CD8-positive, alpha-beta T cell (primary cell): ENCODE measurements at regions of chr3 and their contacts with region 1.

Region 1: DNA sequence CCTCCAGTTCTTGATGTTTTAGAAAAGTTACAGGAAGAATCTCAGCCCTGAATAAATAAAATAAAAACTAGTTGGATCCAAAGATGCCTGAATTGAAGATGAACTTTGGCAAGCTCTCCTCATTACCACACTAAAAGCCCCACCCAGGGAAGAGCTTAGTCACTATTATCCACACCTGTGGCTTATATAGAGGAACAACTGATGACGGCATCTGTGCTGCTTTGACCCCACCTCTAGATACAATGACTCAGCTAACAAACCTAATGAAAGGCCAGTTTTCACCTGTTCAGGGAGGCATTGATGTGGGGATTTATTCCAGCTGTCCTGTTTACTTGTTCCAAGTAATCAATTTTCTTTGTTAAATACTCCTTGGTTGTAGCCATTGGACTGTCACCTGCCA is 604.7 kb upstream of the EPHA6 start:
- DNase-seq: no peak
- ATAC-seq: no peak
- H3K4me3 ChIP-seq: no peak overlapping the region
- H3K4me3 Mint-ChIP-seq: no peak overlapping the region
- H3K27ac ChIP-seq: no peak overlapping the region
- H3K27ac Mint-ChIP-seq: no peak overlapping the region
- H3K4me1 ChIP-seq: no peaks in the 10 kb centered on the region
- H3K4me1 Mint-ChIP-seq: no peaks in the 10 kb centered on the region
- H3K27me3 ChIP-seq: no peaks in the 10 kb centered on the region
- H3K27me3 Mint-ChIP-seq: no peaks in the 10 kb centered on the region
- CTCF ChIP-seq: no peak

Region 2: DNA sequence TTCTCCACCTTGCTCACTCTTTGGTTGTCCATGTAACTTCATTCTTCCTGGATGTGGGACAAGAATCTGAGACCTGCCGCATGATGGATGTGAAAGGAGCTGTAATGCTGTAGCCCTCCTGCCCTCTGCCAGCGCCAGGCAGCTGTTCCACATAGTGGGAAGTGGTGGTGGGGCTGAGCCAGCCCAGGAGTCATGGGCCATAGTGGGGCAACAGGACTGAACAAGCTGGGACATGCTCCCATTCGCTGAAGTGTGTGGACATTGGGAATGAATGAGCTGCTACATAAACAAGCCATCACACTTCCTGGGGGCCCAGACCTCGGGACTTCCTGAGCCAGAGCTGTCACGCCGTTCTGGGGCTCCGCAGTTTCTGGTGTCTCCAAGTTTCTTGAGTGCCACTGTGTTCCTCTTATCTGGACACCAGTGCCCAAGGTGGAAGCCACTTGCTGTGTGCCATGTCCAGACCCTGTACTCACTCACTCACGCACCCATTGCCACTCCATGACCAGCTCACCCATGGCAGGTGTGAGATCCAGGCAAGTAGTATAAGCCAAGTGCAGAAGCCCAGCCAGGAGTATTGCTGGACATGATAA is 19.6 kb before region 1 on chr3:
- CTCF ChIA-PET with region 1: no interaction called
- POLR2A ChIA-PET with region 1: no interaction called
- intact Hi-C with region 1: loop called in 1 of 2 experiments (anchors 1 kb)
- DNase-seq: no peak
- ATAC-seq: no peak
- H3K4me3 ChIP-seq: no peak overlapping the region
- H3K4me3 Mint-ChIP-seq: no peak overlapping the region
- H3K27ac ChIP-seq: no peak overlapping the region
- H3K27ac Mint-ChIP-seq: no peak overlapping the region
- H3K4me1 ChIP-seq: no peaks in the 10 kb centered on the region
- H3K4me1 Mint-ChIP-seq: no peaks in the 10 kb centered on the region
- H3K27me3 ChIP-seq: no peaks in the 10 kb centered on the region
- H3K27me3 Mint-ChIP-seq: no peaks in the 10 kb centered on the region
- CTCF ChIP-seq: no peak

Region 3: GRCh38 chr3:96225494-96225893 is 15.8 kb after region 1 on chr3:
- CTCF ChIA-PET with region 1: no interaction called
- POLR2A ChIA-PET with region 1: no interaction called
- intact Hi-C with region 1: no loop called
- DNase-seq: no peak
- ATAC-seq: no peak
- H3K4me3 ChIP-seq: no peak overlapping the region
- H3K4me3 Mint-ChIP-seq: no peak overlapping the region
- H3K27ac ChIP-seq: no peak overlapping the region
- H3K27ac Mint-ChIP-seq: no peak overlapping the region
- H3K4me1 ChIP-seq: no peaks in the 10 kb centered on the region
- H3K4me1 Mint-ChIP-seq: no peaks in the 10 kb centered on the region
- H3K27me3 ChIP-seq: no peaks in the 10 kb centered on the region
- H3K27me3 Mint-ChIP-seq: no peaks in the 10 kb centered on the region
- CTCF ChIP-seq: no peak